ENCODE measurements at regions of chr4 and their contacts with region 1.

Region 1: DNA sequence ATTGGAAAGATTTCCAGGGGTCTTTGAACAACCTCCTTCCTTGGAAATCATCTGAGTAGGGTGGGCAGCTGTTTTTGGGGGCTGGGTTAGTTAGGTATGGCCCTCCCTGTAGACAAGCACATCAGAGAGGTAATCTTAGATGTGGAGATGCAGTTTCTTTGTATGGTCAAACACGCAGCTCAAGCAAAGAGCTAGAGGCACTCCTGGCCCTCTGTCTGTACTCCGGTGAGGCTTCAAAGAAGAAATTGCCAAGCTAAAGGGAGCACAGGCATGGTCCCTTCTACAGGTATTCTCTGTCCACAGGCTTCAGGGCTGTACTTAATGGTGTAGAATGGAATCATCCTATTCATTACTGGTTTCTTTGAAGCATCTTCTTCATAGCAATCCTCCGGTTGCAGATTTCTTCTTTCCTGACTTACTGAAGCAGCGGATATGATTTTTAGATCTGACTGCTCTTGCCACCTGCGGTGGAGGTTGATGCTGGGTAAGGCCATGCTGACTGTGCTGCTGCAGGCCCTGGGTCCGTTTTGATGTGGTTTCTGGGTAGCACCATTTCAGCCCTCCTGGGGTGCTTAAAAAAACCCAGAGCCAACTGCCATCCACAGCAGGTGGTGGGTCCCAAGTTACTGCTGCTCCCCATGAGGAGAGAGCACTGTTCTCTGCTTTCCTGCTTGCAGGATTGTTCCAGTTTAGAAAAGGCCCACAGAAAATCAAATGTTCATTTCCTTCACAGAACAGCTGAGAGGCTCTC is 318.9 kb upstream of the GATB start:
- DNase-seq: peak; percentile 61
- H3K4me3 Mint-ChIP-seq: peak overlapping the region; percentile 26
- H3K27ac Mint-ChIP-seq: peak overlapping the region; percentile 89
- H3K4me1 Mint-ChIP-seq: peaks cover 30% of the 10 kb centered on the region
- H3K27me3 Mint-ChIP-seq: no peaks in the 10 kb centered on the region

Region 2: GRCh38 chr4:151983854-151984253 is 95.9 kb before region 1 on chr4:
- CTCF ChIA-PET with region 1: no interaction called
- POLR2A ChIA-PET with region 1: no interaction called
- DNase-seq: no peak
- H3K4me3 Mint-ChIP-seq: no peak overlapping the region
- H3K27ac Mint-ChIP-seq: no peak overlapping the region
- H3K4me1 Mint-ChIP-seq: no peaks in the 10 kb centered on the region
- H3K27me3 Mint-ChIP-seq: no peaks in the 10 kb centered on the region

Region 3: DNA sequence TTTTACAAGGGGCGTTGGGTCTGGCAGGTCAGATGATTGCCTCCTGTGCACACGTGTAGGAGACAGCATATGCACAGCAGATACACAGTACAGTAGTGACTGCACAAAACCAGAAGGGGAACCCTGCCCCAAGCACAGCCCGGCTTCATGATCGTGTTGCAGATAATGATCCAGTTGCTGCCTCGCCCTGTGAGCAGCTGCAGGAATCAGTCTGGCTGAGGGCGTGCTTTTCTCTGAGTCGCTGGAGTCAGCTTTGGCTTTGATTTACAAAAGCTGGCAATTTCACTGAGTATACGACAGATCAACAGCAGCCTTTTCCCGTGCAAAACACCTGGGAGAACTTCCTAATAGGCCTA is 15.9 kb before region 1 on chr4:
- CTCF ChIA-PET with region 1: interaction called, 10 read pairs
- POLR2A ChIA-PET with region 1: interaction called, 3 read pairs
- DNase-seq: peak; percentile 77
- H3K4me3 Mint-ChIP-seq: no peak overlapping the region
- H3K27ac Mint-ChIP-seq: no peak overlapping the region
- H3K4me1 Mint-ChIP-seq: peaks cover 35% of the 10 kb centered on the region
- H3K27me3 Mint-ChIP-seq: peaks cover 5% of the 10 kb centered on the region

Region 4: DNA sequence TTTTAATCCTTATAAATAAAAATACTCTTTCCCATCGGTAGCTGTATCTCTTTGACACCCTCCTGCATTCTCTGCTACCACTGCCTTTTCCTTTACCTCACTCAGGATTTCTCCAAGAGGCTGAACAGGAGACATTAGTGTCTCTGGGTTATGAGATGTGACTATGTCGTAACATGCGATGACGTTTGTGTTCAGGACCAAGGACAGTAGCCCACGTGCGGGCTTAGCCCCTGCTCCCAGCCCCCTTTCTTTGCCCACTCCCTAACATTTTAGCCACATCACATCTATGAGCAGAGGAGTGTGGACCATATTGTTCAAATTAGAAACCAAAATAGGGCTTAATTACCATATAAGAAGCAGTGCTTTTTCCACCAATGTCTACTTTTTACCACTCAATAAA is 86.8 kb after region 1 on chr4:
- CTCF ChIA-PET with region 1: no interaction called
- POLR2A ChIA-PET with region 1: no interaction called
- DNase-seq: no peak
- H3K4me3 Mint-ChIP-seq: no peak overlapping the region
- H3K27ac Mint-ChIP-seq: no peak overlapping the region
- H3K4me1 Mint-ChIP-seq: no peaks in the 10 kb centered on the region
- H3K27me3 Mint-ChIP-seq: peaks cover 14% of the 10 kb centered on the region